ENCODE measurements at regions of chr7 and their contacts with region 1.

Region 1: GRCh38 chr7:29921404-29922010 is 68.1 kb downstream of the SCRN1 start:
- DNase-seq: peak; percentile 59
- ATAC-seq: peak; percentile 92
- H3K4me3 ChIP-seq: no peak overlapping the region
- H3K27ac ChIP-seq: no peak overlapping the region
- H3K4me1 ChIP-seq: no peaks in the 10 kb centered on the region
- H3K27me3 ChIP-seq: no peaks in the 10 kb centered on the region
- CTCF ChIP-seq: peak; percentile 97

Region 2: DNA sequence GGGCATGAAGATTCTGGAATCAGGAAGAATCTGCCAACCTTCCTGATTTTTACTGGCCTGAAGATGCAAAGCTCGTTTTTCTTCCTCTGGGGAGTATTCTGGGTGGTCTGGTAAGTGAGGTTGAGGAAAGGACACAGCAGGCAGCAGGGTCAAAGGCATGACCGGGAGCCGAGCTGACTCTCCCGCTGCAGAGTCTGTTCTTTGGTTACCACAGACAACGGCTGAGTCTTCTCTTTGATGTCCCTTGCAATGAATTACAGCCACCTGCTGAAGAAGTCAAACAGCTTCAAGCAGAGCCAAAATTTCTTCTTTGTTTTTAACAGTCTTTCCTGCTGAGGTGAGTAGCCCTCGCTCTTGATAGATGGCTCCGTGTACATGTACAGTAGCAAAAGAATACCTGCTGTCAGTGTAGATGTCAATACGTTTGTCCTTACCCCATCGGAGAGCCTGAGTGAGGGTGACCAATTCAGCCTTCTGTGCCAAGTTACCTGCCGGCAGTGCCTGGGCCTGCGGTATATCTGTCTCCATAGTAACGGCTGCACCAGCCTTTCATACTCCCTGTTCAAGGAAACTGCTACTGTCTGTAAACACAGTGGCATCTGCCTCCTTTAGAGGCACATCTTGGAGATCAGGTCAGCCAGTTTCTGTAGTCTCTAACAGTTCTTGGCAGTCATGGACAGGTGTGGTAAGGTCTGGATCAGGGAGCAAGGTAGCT is 281.5 kb before region 1 on chr7:
- CTCF ChIA-PET with region 1: no interaction called
- POLR2A ChIA-PET with region 1: no interaction called
- in situ Hi-C with region 1: no loop called
- intact Hi-C with region 1: loop called (anchors 10 kb)
- DNase-seq: no peak
- ATAC-seq: no peak
- H3K4me3 ChIP-seq: no peak overlapping the region
- H3K27ac ChIP-seq: no peak overlapping the region
- H3K4me1 ChIP-seq: no peaks in the 10 kb centered on the region
- H3K27me3 ChIP-seq: no peaks in the 10 kb centered on the region
- CTCF ChIP-seq: no peak

Region 3: DNA sequence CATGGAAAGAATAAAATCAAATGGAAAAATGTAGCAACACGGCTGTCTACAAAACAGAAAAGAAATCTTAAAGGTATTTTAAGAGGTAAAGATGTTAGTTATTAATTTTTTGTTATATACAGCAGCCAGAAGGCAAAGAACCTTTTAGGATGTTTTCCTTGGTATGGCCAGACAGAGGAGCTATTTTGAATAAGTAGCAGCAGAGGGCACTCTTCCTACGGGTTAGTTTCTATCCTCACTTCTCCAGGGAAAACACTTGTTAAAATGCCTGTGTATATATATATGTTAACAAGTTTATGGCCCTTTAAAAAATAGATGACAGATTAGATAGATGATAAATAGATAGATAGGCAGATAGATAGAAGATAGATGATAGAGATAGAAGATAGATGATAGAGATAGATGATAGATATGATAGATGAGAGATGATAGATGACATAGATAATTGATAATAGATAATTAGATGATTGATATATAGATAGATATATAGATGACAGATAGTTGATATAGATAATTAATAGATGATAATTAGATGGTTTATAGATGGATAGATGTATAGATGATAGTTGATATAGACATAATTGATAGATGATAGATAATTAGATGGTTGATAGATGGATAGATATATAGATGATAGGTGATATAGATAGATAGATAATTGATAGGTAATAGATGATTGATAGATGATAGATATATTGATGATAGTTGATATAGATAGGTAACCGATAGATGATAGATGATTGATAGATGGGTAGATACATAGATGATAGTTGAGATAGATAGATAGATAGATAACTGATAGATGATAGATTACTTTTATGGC is 173.0 kb before region 1 on chr7:
- CTCF ChIA-PET with region 1: interaction called, 16 read pairs
- POLR2A ChIA-PET with region 1: no interaction called
- in situ Hi-C with region 1: no loop called
- intact Hi-C with region 1: loop called (anchors 1 kb)
- DNase-seq: peak; percentile 51
- ATAC-seq: peak; percentile 95
- H3K4me3 ChIP-seq: no peak overlapping the region
- H3K27ac ChIP-seq: no peak overlapping the region
- H3K4me1 ChIP-seq: peaks cover 3% of the 10 kb centered on the region
- H3K27me3 ChIP-seq: peaks cover 3% of the 10 kb centered on the region; the same call in 1 of the 2 replicates
- CTCF ChIP-seq: peak; percentile 87; the same call in 1 of the 2 replicates

Region 4: GRCh38 chr7:29878081-29878688 is 43.3 kb before region 1 on chr7:
- CTCF ChIA-PET with region 1: interaction called, 10 read pairs
- POLR2A ChIA-PET with region 1: no interaction called
- in situ Hi-C with region 1: no loop called
- intact Hi-C with region 1: loop called (anchors 1 kb)
- DNase-seq: peak; percentile 15
- ATAC-seq: peak; percentile 73
- H3K4me3 ChIP-seq: no peak overlapping the region
- H3K27ac ChIP-seq: no peak overlapping the region
- H3K4me1 ChIP-seq: no peaks in the 10 kb centered on the region
- H3K27me3 ChIP-seq: peaks cover 4% of the 10 kb centered on the region; the same call in 1 of the 2 replicates
- CTCF ChIP-seq: peak; percentile 74

Region 5: GRCh38 chr7:30038182-30038980 is 116.9 kb after region 1 on chr7:
- CTCF ChIA-PET with region 1: no interaction called
- POLR2A ChIA-PET with region 1: no interaction called
- in situ Hi-C with region 1: no loop called
- intact Hi-C with region 1: no loop called
- DNase-seq: no peak
- ATAC-seq: no peak
- H3K4me3 ChIP-seq: no peak overlapping the region
- H3K27ac ChIP-seq: no peak overlapping the region
- H3K4me1 ChIP-seq: no peaks in the 10 kb centered on the region
- H3K27me3 ChIP-seq: no peaks in the 10 kb centered on the region
- CTCF ChIP-seq: no peak

Region 6: GRCh38 chr7:30074422-30075030 is 153.0 kb after region 1 on chr7:
- CTCF ChIA-PET with region 1: interaction called, 10 read pairs
- POLR2A ChIA-PET with region 1: no interaction called
- in situ Hi-C with region 1: no loop called
- intact Hi-C with region 1: no loop called
- DNase-seq: peak; percentile 22
- ATAC-seq: peak; percentile 74
- H3K4me3 ChIP-seq: no peak overlapping the region
- H3K27ac ChIP-seq: no peak overlapping the region
- H3K4me1 ChIP-seq: no peaks in the 10 kb centered on the region
- H3K27me3 ChIP-seq: no peaks in the 10 kb centered on the region
- CTCF ChIP-seq: peak; percentile 77; the same call in 1 of the 2 replicates

Measured in Panc1 (cell line).